RWPE1 (cell line): ENCODE measurements at regions of chr5 and their contacts with region 1.

Region 1: DNA sequence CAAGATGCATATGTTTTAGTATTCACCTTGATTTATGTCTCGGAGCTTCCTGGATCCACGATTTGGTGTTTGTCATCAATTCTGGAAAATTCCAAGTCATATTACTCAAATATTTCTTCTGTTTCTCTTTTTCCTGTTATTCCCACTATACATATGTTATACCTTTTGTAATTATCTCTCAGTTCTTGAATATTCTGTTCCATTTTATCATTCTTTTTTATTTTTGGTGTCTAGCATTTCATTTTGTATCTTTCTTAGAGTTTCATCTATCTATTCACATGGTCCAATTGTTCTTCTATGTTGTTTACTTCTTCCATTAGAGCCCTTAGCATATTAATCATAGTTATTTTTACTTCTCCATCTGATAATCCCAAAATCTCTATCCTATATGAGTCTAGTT is 637.8 kb upstream of the GRAMD2B start:
- DNase-seq: no peak
- H3K27ac ChIP-seq: no peak overlapping the region
- CTCF ChIP-seq: no peak

Region 2: GRCh38 chr5:124371111-124371706 is 1414.2 kb before region 1 on chr5:
- CTCF ChIA-PET with region 1: interaction called, 10 read pairs
- POLR2A ChIA-PET with region 1: no interaction called
- DNase-seq: no peak
- H3K27ac ChIP-seq: no peak overlapping the region
- CTCF ChIP-seq: no peak

Region 3: GRCh38 chr5:125541085-125541484 is 244.3 kb before region 1 on chr5:
- CTCF ChIA-PET with region 1: no interaction called
- POLR2A ChIA-PET with region 1: no interaction called
- DNase-seq: no peak
- H3K27ac ChIP-seq: no peak overlapping the region
- CTCF ChIP-seq: no peak

Region 4: DNA sequence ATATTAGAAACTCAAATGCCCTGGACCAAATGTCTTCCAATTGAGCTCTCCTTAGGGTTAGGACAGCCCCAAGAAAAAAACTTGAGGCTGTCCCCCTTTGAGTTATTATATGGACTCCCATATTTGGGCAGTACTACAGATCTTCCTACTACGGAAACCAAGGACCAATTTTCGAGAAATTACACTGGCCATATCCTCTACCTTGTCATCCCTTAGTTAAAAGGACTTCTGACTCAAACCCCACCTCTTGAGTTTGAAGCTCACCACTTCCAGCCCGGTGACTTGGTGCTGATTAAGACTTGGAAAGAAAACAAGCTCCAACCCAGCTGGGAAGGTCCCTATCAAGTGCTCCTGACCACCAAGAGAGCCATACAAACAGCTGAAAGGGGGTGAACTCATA is 140.8 kb after region 1 on chr5:
- CTCF ChIA-PET with region 1: no interaction called
- POLR2A ChIA-PET with region 1: no interaction called
- DNase-seq: no peak
- H3K27ac ChIP-seq: no peak overlapping the region
- CTCF ChIP-seq: no peak